Prostate gland (tissue), 2 donors: ENCODE measurements at regions of chr12 and their contacts with region 1.

Region 1: GRCh38 chr12:52156736-52157565 is 34.9 kb downstream of the KRT80 start:
- DNase-seq: peak; percentile 77
- H3K4me3 ChIP-seq: no peak overlapping the region
- H3K27ac ChIP-seq: no peak overlapping the region
- H3K4me1 ChIP-seq: no peaks in the 10 kb centered on the region
- H3K27me3 ChIP-seq: no peaks in the 10 kb centered on the region
- CTCF ChIP-seq: peak; percentile 91 to 98 (median 94)
- POLR2A ChIP-seq: no peak

Region 2: DNA sequence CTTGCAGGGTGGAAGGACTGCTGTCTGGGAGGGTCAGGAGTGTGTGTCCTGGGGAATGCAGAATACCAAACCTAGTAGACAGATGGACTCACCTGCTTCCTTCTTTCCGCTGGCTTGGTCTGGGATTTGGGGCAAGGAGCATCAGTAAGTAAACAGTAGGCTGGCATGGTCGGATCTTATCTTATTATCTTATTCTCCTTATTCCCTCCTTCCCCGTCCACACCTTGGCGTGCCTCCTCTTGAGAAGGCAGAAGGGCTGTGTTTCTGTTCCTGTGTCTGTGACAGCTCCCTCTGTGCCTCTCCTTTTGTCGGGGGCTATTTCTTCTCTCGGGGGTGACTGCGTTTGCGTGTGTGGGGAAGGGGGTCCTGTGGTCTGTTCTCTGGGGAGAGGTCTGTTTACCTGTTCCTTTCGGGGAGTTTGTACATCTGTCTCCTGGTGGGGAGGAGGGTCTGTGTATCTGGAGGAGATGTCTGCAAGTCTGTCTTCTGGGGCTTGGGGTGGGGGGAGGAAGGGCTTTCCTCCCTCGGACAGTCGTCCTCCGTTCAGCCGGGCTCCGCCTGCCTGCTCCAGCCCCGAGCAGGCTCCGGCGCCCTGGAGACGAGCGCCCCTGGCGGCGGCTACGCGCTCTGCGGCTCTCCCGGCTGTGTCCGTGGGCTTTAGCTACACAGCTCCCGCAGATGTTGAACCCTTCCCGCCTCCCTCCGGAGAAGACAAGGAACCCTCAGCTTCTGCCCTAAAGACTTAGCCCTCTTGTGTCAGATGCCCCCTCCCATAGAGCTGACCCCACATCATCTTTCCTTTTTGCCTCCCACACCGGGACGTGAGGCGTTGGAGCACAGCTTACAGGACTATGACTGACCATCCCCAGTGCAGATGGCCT is 121.8 kb after region 1 on chr12:
- intact Hi-C with region 1: loop called (anchors 5 kb)
- DNase-seq: peak; percentile 79
- H3K4me3 ChIP-seq: peak overlapping the region in 1 of 2 donors; percentile 21
- H3K27ac ChIP-seq: peak overlapping the region; percentile 78 to 82
- H3K4me1 ChIP-seq: peaks cover 5% of the 10 kb centered on the region
- H3K27me3 ChIP-seq: no peaks in the 10 kb centered on the region
- CTCF ChIP-seq: peak; percentile 90 to 98 (median 93)
- POLR2A ChIP-seq: peak; percentile 30

Region 3: GRCh38 chr12:52506858-52507715 is 350.1 kb after region 1 on chr12:
- intact Hi-C with region 1: loop called (anchors 10 kb)
- DNase-seq: no peak
- H3K4me3 ChIP-seq: no peak overlapping the region
- H3K27ac ChIP-seq: no peak overlapping the region
- H3K4me1 ChIP-seq: no peaks in the 10 kb centered on the region
- H3K27me3 ChIP-seq: no peaks in the 10 kb centered on the region
- CTCF ChIP-seq: peak in 3 of 4 experiments; percentile 46 to 66 (median 63)
- POLR2A ChIP-seq: no peak

Region 4: DNA sequence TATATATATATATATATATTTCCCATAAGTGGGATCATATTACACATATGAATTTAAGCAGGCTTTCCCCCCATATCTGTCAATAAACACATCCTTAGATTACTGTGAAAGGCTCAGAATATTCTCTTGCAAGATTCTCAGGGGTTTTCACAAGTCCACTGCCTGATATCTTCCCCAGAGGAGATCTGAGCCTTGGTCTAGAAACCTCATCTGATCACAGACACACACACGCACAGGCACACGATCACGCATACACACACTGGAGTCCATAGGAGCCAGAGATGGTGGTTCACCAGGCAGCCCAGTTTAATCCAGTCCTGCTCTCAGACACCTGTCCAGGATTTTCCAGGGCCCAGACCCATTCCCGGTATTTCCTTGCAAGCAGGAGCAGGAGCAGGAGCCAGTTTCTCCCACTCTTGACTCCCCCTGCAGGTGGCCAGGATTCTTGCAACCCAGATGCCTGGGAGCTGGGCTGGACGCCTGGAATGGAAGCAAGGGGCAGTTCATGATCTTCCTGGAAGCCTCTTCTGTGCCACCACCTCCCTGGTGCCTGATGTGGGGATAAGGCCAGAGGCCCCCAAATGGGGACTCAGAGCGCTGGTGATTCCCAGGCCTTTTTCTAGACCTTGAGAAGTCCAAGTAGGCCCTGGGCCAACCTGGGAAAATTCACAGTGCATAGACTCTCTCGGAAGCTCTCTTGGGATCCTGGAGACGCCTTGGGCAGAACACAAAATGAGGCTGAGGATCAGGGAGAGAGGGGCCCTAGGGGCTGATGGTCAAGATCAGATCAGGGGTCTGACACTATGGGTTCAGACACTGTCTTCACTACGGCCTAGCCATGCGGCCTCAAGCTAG is 708.4 kb after region 1 on chr12:
- intact Hi-C with region 1: loop called (anchors 5 kb)
- DNase-seq: peak; percentile 51
- H3K4me3 ChIP-seq: no peak overlapping the region
- H3K27ac ChIP-seq: no peak overlapping the region
- H3K4me1 ChIP-seq: no peaks in the 10 kb centered on the region
- H3K27me3 ChIP-seq: no peaks in the 10 kb centered on the region
- CTCF ChIP-seq: peak; percentile 41 to 82 (median 65)
- POLR2A ChIP-seq: no peak

Region 5: DNA sequence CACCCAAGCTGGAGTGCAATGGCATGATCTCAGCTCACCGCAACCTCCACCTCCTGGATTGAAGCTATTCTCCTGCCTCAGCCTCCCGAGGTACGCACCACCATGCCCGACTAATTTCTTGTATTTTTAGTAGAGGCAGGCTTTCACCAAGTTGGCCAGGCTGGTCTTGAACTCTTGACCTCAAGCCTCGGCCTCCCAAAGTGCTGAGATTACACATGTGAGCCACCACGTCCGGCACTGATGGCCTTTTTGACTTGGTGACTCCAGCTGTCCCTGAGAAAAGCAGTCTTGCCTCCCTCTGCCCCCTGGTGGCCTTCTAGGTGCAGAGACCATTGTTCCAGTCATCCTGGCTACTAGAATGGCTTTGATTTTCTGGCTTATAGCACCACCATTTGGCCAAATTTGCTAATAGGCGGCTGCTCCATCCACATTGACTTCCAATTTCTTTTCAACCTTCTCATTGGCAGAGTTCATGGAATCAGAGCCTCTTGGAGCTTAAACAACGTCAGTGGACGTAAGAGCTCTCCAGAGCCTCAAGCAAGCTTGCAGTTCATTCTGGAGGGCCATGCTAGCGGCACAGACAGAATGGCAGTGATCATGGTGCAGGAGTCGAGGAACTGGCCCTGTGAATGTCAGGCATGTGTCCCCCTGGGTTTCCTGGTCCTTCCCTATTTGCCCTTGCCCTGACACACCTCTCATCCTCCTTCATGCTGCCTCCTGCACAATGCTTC is 823.9 kb after region 1 on chr12:
- intact Hi-C with region 1: loop called (anchors 10 kb)
- DNase-seq: peak; percentile 94
- H3K4me3 ChIP-seq: no peak overlapping the region
- H3K27ac ChIP-seq: no peak overlapping the region
- H3K4me1 ChIP-seq: no peaks in the 10 kb centered on the region
- H3K27me3 ChIP-seq: no peaks in the 10 kb centered on the region
- CTCF ChIP-seq: peak; percentile 81 to 100 (median 98)
- POLR2A ChIP-seq: no peak